Left cardiac atrium (tissue), 4 donors: ENCODE measurements at regions of chr12 and their contacts with region 1.

Region 1: GRCh38 chr12:120139958-120140357 is 23.4 kb upstream of the RAB35 start:
- DNase-seq: no peak
- ATAC-seq: no peak

Region 2: GRCh38 chr12:120055231-120056021 is 84.5 kb before region 1 on chr12:
- intact Hi-C with region 1: no loop called
- DNase-seq: no peak
- ATAC-seq: peak in 1 of 2 donors; percentile 77

Region 3: DNA sequence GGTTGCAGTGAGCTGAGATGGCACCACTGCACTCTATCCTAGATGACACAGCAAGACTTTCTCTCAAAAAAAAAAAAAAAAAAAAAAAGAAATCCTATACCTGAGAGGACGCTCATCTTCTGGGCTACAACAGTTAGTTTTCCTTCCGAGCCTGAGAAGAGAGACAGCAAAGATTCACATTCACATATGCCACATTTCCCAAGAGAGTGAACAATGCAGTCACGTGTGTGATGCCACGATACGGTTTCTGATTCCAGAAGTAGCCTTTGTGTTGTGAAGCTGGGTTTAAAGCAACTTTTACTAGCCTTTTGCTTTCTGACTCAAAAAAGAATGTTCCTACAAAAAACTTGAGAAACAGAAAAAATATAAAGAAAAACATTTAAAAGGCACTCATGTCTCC is 35.1 kb after region 1 on chr12:
- intact Hi-C with region 1: loop called in 1 of 2 experiments (anchors 5 kb)
- DNase-seq: no peak
- ATAC-seq: no peak

Region 4: DNA sequence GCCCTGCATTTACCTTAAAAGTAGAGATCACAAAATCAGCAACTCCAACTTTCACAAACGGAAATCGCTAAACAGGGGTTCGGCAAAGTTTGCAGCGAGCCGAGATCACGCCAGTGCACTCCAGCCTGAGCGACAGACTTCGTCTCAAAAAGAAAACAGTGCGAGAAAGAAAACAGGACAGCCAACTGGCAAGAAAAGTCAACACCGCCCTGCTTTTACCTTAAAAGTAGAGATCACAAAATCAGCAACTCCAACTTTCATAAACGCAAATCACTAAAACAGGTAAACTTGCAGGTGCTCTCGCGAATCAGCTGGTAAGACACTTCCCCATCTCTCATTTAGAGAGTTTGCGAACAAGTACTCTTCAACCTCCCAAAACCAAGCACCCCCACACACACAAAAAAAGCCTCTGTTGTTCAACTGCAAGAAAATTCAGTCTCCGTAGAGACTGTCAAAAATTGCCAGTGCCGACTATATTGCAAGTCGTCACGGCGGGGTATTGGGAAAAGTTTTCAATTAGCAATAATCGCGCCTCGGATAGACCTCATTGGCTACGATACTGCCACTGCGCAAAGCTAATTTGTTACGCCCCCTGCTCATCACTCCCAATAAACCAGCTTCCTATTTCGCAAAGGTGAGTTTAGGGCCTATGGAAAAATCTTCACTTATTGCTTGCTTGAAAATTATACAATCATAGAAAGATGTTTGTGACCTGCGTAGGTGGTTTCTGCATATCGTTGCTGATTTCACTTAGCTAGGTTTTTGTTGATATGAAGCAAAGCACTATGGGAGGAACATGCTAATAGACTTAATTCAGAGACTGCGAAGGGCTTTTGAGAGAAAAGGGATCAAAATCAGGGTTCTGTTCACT is 152.9 kb after region 1 on chr12 and contains the start of gene RNU4-1:
- intact Hi-C with region 1: no loop called
- DNase-seq: peak; percentile 76
- ATAC-seq: peak; percentile 59 to 70
- total RNA-seq, gene RNU4-1: 1,261 to 6,779 TPM